Activated CD8-positive, alpha-beta T cell treated with anti-CD3 and anti-CD28 coated beads, Interleukin-2, amount 10 ng/mL, durations not matched to agents 7 days and 5 days (primary cell): ENCODE measurements at regions of chr11 and their contacts with region 1.

Region 1: GRCh38 chr11:10455637-10456487 is 798 bp downstream of the AMPD3 start:
- DNase-seq: peak; percentile 88
- ATAC-seq: peak; percentile 83
- H3K4me3 Mint-ChIP-seq: peak overlapping the region; percentile 85
- H3K27ac Mint-ChIP-seq: peak overlapping the region; percentile 92
- H3K4me1 Mint-ChIP-seq: peaks cover 67% of the 10 kb centered on the region
- H3K27me3 Mint-ChIP-seq: peaks cover 17% of the 10 kb centered on the region

Region 2: DNA sequence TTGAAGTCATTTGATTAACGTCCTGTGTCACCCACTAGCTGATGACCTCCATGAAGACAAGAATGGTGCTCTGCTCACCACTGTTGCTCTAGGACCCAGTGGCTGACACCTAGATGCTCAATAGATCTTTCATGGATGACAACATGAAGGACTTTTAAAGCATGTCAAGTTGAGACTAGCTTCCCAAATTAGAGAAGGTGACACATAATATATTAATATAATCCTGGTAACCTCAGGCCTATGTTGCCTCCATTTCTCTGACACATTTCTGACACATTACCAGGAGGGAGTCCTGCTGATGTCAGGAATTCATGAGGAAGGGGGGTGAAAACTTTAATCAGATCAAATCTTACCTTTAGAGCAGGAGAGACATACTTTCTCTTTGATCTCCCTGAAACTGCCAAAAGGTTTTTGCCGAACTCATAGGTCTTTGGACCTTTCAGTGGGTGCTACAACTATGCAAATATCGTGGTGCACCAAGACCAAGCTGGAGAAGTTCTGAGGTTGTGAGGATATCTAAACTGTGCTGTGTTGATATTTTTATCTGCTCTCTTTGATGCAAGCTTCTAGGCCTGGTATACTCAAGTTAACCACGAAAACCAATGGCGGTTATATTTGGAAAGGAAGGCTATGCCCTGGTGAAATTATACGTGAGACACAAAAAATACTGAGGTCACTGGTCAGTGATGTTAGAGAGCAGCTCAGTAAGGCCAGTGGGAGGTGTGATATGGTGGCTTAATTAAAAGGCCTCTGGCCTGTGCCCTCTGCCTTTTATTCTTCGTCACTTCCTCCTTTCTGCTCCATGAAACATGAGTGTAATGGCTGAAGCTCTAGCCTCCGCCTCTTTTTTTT is 14.0 kb before region 1 on chr11:
- CTCF ChIA-PET with region 1: interaction called, 10 read pairs
- POLR2A ChIA-PET with region 1: interaction called, 9 read pairs
- DNase-seq: peak; percentile 68
- ATAC-seq: peak; percentile 90
- H3K4me3 Mint-ChIP-seq: peak overlapping the region; percentile 28
- H3K27ac Mint-ChIP-seq: peak overlapping the region; percentile 70
- H3K4me1 Mint-ChIP-seq: peaks cover 41% of the 10 kb centered on the region
- H3K27me3 Mint-ChIP-seq: peaks cover 38% of the 10 kb centered on the region

Region 3: DNA sequence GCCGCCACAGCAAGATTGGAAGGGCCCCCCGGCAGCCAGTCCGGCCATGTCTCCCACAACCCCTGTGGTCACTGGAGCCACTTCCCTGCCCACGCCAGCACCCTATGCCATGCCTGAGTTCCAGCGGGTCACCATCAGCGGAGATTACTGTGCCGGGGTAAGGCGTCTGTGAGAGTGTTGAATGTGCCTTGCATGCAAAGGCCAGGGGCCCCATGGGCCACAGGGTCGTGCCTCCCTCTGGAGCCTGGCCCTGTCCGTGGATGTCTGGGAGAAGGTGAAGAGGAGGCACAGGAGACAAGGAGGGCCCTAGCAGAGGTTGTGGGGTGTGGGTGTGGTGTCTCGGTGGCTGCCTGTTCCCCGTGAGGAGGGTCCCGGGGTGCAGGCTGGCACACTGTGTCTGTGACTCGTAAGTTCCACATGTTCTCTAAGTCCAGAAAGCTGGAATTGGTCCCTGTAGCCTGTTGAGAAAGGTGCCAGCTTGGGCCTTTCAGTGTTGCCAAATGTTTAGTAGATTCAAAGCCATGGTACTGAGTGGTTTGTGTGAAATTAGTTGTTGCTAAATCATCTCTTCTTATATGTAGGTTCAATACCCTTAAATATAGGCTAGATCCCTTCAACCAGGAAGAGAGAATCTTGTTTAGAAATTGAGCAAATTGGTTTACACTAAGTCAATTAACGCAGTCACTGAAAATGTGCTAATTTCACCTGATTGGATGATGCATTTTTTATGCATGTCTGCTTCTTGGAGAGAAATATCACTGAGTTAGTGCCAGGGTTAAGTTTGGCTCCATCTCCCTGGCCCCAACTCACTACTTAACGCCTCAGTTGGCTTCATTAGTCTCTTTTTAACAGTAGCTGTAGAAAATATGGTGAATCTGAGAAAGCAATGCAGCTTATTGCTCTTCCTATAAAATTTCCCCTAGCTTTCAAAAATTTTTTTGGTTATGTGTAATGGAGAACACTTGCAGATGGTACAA is 23.0 kb after region 1 on chr11:
- CTCF ChIA-PET with region 1: no interaction called
- POLR2A ChIA-PET with region 1: no interaction called
- DNase-seq: no peak
- ATAC-seq: no peak
- H3K4me3 Mint-ChIP-seq: no peak overlapping the region
- H3K27ac Mint-ChIP-seq: no peak overlapping the region
- H3K4me1 Mint-ChIP-seq: peaks cover 4% of the 10 kb centered on the region
- H3K27me3 Mint-ChIP-seq: no peaks in the 10 kb centered on the region

Region 4: DNA sequence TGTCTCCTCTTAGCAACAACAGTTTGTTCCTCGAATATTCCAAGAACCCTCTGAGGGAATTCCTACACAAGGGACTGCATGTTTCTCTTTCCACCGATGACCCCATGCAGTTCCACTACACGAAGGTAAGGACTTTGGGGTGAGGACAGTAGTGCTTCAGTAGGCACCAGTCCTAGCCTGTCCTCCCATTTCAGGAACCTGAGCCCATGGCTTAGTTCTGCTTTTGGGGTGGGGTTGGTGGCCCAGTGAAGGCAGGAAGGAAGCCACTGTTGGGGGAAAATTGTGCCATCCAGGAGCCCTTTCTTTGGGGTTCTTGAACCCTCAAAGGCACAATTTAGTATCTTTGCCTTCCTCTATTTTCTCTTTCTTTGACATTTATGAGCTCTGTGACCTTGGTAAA is 46.9 kb after region 1 on chr11:
- CTCF ChIA-PET with region 1: no interaction called
- POLR2A ChIA-PET with region 1: no interaction called
- DNase-seq: no peak
- ATAC-seq: no peak
- H3K4me3 Mint-ChIP-seq: no peak overlapping the region
- H3K27ac Mint-ChIP-seq: peak overlapping the region; percentile 32
- H3K4me1 Mint-ChIP-seq: no peaks in the 10 kb centered on the region
- H3K27me3 Mint-ChIP-seq: no peaks in the 10 kb centered on the region